ENCODE measurements at regions of chr9 and their contacts with region 1.

Region 1: DNA sequence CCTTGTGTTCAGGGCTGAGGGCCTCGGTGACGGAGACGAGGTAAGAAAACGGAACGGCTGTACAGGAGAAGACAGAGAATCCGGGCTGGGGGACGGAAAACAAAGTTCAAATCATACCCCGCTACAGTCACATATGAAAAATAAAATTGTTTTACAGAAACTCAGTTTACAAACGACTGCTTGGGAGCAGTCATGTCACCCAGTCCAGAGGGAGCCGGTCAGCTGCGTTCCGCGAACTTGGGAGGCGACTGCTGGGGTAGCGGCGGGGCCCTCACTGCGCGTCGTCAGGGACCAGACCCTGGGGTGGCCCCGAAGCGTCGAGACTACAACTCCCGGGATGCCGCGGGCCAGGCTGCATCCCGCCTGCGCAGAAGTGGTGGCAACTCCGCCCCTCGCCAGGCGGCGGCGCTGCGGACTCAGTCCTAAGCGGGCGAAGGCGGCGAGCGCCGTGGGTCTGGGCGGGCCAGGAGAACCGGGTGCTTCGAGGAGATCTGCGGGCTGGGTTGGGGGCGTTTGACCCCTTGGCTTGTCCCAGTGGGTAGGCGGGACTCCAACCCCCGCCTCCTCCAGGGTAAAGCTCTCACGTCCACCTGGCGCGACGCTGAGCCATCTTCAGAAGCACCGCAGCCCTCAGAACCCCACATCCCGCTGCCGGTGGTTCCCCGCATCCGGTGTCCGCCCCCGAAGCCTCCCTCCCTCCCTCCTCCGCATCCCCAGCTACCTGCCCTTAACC is 4.0 kb downstream of the SIT1 start:
- DNase-seq: peak; percentile 95
- ATAC-seq: peak; percentile 89
- H3K4me3 ChIP-seq: peak overlapping the region; percentile 76 to 90 (median 84)
- H3K4me3 Mint-ChIP-seq: peak overlapping the region; percentile 97
- H3K27ac ChIP-seq: peak overlapping the region; percentile 88 to 95
- H3K27ac Mint-ChIP-seq: peak overlapping the region; percentile 97
- H3K4me1 ChIP-seq: peaks cover 76 to 92% of the 10 kb centered on the region in 2 donors
- H3K4me1 Mint-ChIP-seq: peaks cover 81% of the 10 kb centered on the region
- H3K27me3 ChIP-seq: no peaks in the 10 kb centered on the region
- H3K27me3 Mint-ChIP-seq: no peaks in the 10 kb centered on the region
- CTCF ChIP-seq: peak; percentile 94

Region 2: DNA sequence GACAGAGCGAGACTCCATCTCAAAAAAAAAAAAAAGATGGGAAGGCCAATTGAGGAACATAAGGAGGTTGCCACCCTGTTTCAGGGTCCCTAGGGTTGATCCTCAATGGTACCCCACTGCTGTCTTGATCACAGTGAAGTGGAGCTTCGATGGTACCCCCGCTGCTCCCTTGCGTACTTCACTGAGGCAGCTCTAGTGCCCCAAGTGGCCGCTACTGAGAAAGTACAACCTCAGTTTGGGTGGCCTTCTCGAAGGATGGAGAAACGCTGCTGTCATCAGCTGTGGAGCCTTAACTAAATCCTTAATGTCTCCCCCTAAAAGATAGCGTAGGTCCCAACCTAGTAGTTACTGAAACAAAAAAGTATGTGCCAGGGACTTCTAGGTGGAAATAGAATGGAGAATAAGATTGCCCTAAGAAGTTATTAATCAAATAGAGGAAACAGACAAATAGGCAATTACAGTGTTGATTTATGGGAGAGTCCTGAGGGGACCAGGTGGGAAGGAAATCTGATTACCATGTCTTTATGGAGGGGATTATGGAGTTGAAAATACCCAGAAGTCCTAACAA is 35.4 kb before region 1 on chr9:
- CTCF ChIA-PET with region 1: interaction called, 357 read pairs
- POLR2A ChIA-PET with region 1: interaction called, 114 read pairs
- intact Hi-C with region 1: no loop called
- DNase-seq: peak; percentile 72
- ATAC-seq: peak; percentile 90
- H3K4me3 ChIP-seq: no peak overlapping the region
- H3K4me3 Mint-ChIP-seq: no peak overlapping the region
- H3K27ac ChIP-seq: peak overlapping the region in 1 of 2 donors; percentile 45
- H3K27ac Mint-ChIP-seq: peak overlapping the region; percentile 77
- H3K4me1 ChIP-seq: peaks cover 59 to 85% of the 10 kb centered on the region in 2 donors
- H3K4me1 Mint-ChIP-seq: peaks cover 67% of the 10 kb centered on the region
- H3K27me3 ChIP-seq: no peaks in the 10 kb centered on the region
- H3K27me3 Mint-ChIP-seq: no peaks in the 10 kb centered on the region
- CTCF ChIP-seq: peak; percentile 76

Region 3: DNA sequence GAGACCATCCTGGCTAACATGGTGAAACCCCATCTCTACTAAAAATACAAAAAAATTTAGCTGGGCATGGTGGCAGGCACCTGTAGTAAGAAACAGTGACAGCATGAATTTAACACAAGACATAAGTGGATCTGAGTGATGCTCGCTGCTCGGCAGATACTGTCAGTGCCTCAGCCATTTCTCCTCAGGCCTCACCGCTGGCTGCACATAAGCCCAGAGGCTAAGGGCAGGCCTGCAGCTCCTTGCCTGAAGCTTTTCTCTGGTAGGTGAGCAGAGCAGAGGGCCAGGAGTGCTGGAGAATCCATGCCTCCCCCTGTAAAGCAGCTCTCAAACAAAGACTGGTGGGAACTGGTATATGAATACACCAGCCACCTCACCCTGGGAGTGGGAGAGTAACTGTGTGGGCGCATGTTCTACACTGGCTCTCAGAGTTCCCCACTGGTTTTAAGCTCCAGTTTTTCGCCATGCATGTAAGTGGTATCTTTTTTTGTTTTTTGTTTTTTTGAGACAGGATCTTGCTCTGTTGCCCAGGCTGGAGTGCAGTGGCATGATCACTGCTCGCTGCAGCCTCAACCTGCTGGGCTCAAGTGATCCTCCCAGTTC is 18.2 kb before region 1 on chr9:
- CTCF ChIA-PET with region 1: interaction called, 13 read pairs
- POLR2A ChIA-PET with region 1: interaction called, 3 read pairs
- intact Hi-C with region 1: no loop called
- DNase-seq: no peak
- ATAC-seq: no peak
- H3K4me3 ChIP-seq: no peak overlapping the region
- H3K4me3 Mint-ChIP-seq: no peak overlapping the region
- H3K27ac ChIP-seq: no peak overlapping the region
- H3K27ac Mint-ChIP-seq: peak overlapping the region; percentile 10
- H3K4me1 ChIP-seq: peaks cover 14 to 16% of the 10 kb centered on the region in 2 donors
- H3K4me1 Mint-ChIP-seq: peaks cover 37% of the 10 kb centered on the region
- H3K27me3 ChIP-seq: no peaks in the 10 kb centered on the region
- H3K27me3 Mint-ChIP-seq: no peaks in the 10 kb centered on the region
- CTCF ChIP-seq: no peak

Region 4: DNA sequence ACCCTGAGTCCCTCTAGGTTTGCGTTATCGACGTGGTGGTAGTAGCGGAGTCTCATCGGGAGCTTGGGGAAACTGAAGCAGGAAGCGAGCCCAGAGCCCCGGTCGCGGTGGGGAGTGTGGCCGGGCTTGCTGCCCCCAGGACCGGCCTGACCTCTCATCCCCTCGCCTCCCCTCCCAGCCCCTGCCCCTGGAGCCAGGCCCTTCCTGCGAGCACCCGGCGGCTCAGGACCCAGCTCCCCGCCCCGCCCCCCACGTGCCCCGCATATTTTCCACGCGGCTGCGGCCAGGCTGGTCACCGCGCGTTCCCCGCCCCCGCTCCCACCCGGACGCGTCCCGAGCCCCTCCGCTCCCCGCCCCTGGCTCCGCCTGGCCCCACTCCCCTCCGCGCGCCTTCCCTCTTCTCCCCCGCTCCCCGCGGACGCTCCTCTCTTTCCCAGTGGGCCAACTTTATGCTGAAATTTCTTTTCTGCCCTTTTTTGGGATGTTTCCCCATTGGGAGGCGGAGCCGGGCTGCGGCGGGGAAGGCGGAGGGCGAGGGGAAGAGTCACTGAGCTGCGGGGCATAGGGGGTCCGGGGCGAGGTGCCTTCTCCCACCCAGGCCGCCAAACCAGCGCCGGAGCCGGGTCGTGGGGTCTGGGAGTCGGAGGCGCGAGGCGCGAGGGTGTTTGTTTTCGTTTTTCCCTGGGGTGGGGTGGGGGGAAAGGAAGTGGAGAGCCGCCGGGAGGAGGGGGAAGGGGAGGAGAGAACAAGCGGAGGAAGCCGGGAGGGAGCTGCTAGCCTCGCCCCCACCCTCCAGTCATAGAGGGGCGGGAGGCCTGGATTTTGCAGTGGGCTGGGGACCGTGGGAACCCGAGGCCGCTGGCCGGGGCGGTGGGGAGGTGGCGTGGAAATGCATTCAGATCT is 44.0 kb after region 1 on chr9:
- CTCF ChIA-PET with region 1: interaction called, 52 read pairs
- POLR2A ChIA-PET with region 1: interaction called, 9 read pairs
- intact Hi-C with region 1: no loop called
- DNase-seq: peak; percentile 38
- ATAC-seq: peak; percentile 48
- H3K4me3 ChIP-seq: peak overlapping the region; percentile 56 to 89 (median 67)
- H3K4me3 Mint-ChIP-seq: peak overlapping the region; percentile 88
- H3K27ac ChIP-seq: peak overlapping the region in 1 of 2 donors; percentile 65
- H3K27ac Mint-ChIP-seq: peak overlapping the region; percentile 65
- H3K4me1 ChIP-seq: peaks cover 3 to 17% of the 10 kb centered on the region in 2 donors
- H3K4me1 Mint-ChIP-seq: peaks cover 11% of the 10 kb centered on the region
- H3K27me3 ChIP-seq: no peaks in the 10 kb centered on the region
- H3K27me3 Mint-ChIP-seq: no peaks in the 10 kb centered on the region
- CTCF ChIP-seq: no peak